Activated CD4-positive, alpha-beta T cell treated with anti-CD3 and anti-CD28 coated beads for 36 hours (primary cell): ENCODE measurements at regions of chr11 and their contacts with region 1.

Region 1: DNA sequence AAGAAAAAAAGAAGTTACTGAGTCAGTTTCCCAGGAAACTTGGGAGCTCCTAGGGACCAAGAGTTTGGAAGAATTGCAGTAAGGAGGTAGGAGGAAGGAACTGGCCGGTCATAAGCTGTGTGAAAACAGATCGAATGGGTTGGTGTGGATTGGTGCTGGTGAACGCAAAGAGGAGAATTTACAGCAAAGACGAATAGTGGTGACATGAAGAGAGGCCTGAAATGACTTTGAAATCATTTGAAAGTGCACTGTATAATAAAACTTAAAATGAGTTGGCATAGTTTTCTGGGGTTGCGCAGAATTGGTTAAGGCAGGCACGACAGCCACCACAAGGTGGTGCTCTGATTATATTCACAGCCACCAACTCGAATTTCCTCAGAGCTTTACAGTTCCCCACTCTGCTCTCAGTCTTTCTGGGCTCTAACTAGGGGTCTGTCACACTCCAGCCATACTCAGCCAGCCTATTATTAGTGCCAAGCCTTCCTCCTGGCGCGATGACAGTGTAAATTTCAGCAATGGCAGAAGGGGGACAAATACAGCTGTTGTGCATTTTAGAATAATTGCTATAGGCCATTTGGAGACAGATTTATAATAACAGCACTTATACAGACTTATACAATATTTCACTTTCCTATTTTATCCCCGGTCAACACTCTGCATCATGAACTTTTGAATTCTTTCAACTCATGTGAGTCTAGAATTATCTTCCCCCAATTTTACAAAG is 8.3 kb upstream of the HTR3B start:
- DNase-seq: peak; percentile 52
- ATAC-seq: peak; percentile 75
- H3K4me3 Mint-ChIP-seq: no peak overlapping the region
- H3K27ac Mint-ChIP-seq: no peak overlapping the region
- H3K4me1 Mint-ChIP-seq: no peaks in the 10 kb centered on the region
- H3K27me3 Mint-ChIP-seq: peaks cover 2% of the 10 kb centered on the region

Region 2: DNA sequence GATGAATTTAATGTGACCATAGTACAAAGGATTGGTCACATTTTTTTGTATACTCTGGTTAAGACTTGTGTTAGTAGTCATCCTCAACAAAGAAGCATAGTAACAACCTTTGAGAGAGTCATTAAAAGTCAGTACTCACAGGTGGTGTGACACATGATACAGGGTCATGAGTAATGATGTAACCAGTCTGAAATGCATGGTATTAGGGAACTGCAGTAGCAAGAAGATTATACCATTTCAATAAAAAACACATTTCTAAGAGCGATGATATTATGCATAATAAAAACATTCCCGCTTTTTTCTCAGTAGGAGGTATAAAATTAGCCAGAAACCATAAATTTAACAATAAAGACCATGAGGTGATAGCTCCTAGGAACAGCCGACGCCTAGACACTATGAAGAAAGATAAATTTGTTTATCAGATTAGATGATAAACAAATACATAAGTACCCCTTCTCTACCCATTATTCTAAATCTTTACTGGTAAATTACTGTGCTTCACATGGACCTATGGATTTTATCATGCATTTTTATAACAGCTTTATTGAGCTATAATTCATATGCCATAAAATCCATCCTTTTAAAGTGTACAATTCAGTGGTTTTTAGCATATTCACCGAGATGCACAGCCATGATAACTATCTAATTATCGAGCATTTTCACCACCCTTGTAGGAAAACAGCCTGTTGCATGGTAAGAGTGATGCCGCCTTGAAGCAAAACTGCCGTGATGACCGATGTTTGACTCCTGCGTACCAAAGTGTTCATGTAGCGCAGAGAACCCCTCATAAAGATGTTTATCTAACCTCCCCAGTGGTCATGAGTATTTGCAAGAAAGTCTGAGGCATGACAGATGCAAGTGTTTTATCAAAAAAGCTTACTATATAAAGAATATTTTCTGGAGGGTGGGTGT is 232.0 kb before region 1 on chr11:
- CTCF ChIA-PET with region 1: no interaction called
- POLR2A ChIA-PET with region 1: no interaction called
- intact Hi-C with region 1: no loop called
- DNase-seq: no peak
- ATAC-seq: no peak
- H3K4me3 Mint-ChIP-seq: no peak overlapping the region
- H3K27ac Mint-ChIP-seq: no peak overlapping the region
- H3K4me1 Mint-ChIP-seq: no peaks in the 10 kb centered on the region
- H3K27me3 Mint-ChIP-seq: peaks cover 10% of the 10 kb centered on the region

Region 3: DNA sequence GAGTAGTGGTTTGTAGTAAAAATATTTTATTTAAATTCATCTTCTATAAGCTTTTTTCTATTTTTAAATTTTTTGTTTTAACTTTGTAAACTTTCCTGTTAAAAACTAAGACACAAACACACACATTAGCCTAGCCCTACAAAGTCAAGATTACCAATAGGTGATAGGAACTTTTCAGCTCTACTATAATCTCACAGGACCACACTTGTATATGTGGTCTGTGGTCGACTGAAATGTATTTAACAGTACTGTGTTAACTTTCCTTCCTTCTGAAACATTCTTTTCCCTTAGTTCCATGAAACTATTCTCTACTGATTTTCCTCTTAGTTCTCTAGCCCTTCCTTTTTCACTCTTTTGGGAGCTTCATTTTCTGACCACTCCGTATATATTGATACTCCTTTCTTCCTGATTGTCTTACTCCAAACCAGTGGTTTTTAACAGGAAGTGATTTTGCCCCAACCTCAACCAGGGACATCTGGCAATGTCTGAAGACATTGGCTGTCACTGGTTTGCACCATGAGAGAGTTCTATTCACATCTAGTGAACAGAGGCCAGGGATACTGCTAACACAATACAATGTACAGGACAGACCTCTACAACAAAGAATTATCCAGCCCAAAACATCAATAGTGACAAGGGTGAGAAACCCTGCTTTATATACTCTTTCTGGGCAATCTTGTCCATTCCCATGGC is 131.6 kb before region 1 on chr11:
- CTCF ChIA-PET with region 1: no interaction called
- POLR2A ChIA-PET with region 1: no interaction called
- intact Hi-C with region 1: no loop called
- DNase-seq: no peak
- ATAC-seq: no peak
- H3K4me3 Mint-ChIP-seq: no peak overlapping the region
- H3K27ac Mint-ChIP-seq: peak overlapping the region; percentile 23
- H3K4me1 Mint-ChIP-seq: peaks cover 11% of the 10 kb centered on the region
- H3K27me3 Mint-ChIP-seq: no peaks in the 10 kb centered on the region

Region 4: DNA sequence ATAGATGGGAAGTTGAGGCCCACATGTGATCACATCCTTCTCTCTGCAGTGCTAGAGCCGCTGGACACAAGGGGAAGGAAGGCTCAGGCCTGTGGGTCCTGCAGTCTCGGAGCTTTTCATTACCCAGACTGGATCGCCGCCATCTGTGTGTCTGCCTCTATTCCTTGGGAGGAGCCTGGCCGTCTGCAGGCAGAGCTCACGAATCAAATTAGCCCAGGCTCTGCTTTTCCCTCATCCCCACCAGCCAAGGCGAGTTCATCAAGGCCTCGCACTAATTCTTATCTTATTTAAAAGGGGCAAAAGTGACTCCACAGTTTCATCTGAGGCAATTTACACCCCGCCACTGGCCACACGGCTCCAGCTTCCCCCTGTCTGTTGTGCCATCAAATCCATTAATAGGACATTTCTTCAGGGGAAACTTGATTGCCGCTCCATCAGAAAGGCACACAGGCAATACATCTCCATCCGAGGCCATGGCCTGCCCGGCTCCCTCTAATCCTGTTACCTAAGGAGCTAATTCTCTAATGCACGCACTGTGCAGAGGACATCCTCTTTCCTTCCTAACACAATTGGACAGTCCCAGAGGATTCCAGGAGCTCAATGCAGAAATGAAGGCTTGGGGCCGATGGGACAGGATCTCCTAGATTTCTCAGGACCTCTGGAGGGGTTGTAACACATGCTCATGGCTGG is 75.3 kb after region 1 on chr11:
- CTCF ChIA-PET with region 1: no interaction called
- POLR2A ChIA-PET with region 1: no interaction called
- intact Hi-C with region 1: no loop called
- DNase-seq: no peak
- ATAC-seq: no peak
- H3K4me3 Mint-ChIP-seq: no peak overlapping the region
- H3K27ac Mint-ChIP-seq: no peak overlapping the region
- H3K4me1 Mint-ChIP-seq: no peaks in the 10 kb centered on the region
- H3K27me3 Mint-ChIP-seq: peaks cover 4% of the 10 kb centered on the region

Region 5: GRCh38 chr11:114036156-114036811 is 140.0 kb after region 1 on chr11:
- CTCF ChIA-PET with region 1: interaction called, 3 read pairs
- POLR2A ChIA-PET with region 1: no interaction called
- intact Hi-C with region 1: loop called in 1 of 2 experiments (anchors 5 kb)
- DNase-seq: peak; percentile 73
- ATAC-seq: peak; percentile 88
- H3K4me3 Mint-ChIP-seq: no peak overlapping the region
- H3K27ac Mint-ChIP-seq: no peak overlapping the region
- H3K4me1 Mint-ChIP-seq: no peaks in the 10 kb centered on the region
- H3K27me3 Mint-ChIP-seq: peaks cover 7% of the 10 kb centered on the region